OCI-LY7 (cell line): ENCODE measurements at regions of chr4 and their contacts with region 1.

Region 1: GRCh38 chr4:122758033-122758432 is 25.5 kb downstream of the BBS12 start:
- DNase-seq: peak; percentile 29
- H3K4me3 ChIP-seq: no peak overlapping the region
- H3K27ac ChIP-seq: no peak overlapping the region
- H3K4me1 ChIP-seq: no peaks in the 10 kb centered on the region
- CTCF ChIP-seq: peak; percentile 96

Region 2: GRCh38 chr4:122930862-122931261 is 172.8 kb after region 1 on chr4:
- CTCF ChIA-PET with region 1: no interaction called
- POLR2A ChIA-PET with region 1: interaction called, 4 read pairs
- intact Hi-C with region 1: loop called (anchors 1 kb)
- DNase-seq: peak; percentile 27
- H3K4me3 ChIP-seq: no peak overlapping the region
- H3K27ac ChIP-seq: no peak overlapping the region
- H3K4me1 ChIP-seq: no peaks in the 10 kb centered on the region
- CTCF ChIP-seq: peak; percentile 87